ENCODE measurements at regions of chr2 and their contacts with region 1.

Region 1: GRCh38 chr2:45935791-45936622 is 284.5 kb downstream of the PRKCE start:
- DNase-seq: peak; percentile 95 to 98
- ATAC-seq: peak; percentile 75
- H3K4me3 ChIP-seq: no peak overlapping the region
- H3K27ac ChIP-seq: peak overlapping the region; percentile 89 to 90
- H3K4me1 ChIP-seq: peaks cover 44% of the 10 kb centered on the region
- CTCF ChIP-seq: peak; percentile 97
- EP300 ChIP-seq: peak in 1 of 2 experiments; percentile 59; a peak in 1 of 5 replicates
- POLR2A ChIP-seq: no peak
- RAD21 ChIP-seq: peak; percentile 98

Region 2: DNA sequence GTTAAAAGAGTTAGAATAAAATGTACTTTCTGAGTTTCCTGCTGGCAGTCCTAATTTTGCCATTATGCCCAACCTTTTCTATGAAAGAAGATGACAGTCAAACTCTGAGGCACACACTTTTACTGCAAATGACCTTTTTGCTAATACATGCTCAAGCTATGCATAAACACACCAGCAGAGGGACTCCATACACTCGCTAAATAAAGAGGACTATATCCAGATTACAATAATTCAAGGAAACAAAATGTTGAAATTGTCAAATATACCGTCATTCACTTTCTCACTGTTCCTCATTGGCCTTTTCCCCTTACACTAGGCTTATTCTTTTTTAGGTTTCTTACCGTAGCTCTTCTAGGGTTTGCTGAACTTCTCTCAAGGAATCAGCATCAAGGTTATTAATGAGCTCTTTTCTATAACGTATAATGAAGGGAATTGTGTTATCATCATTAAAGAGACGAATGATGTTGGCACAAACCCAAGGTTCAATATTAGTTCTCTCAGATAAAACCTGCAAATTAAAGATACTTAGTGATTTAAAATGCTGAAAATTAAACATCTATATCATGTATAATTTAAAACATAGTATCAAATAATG is 350.6 kb before region 1 on chr2:
- CTCF ChIA-PET with region 1: interaction called, 20 read pairs
- POLR2A ChIA-PET with region 1: no interaction called
- DNase-seq: peak; percentile 43 to 77
- ATAC-seq: peak; percentile 91 to 92
- H3K4me3 ChIP-seq: no peak overlapping the region
- H3K27ac ChIP-seq: no peak overlapping the region
- H3K4me1 ChIP-seq: peaks cover 9% of the 10 kb centered on the region; the same call in 2 of the 3 replicates
- CTCF ChIP-seq: peak; percentile 77
- EP300 ChIP-seq: no peak
- POLR2A ChIP-seq: no peak
- RAD21 ChIP-seq: peak; percentile 64 to 65

Region 3: DNA sequence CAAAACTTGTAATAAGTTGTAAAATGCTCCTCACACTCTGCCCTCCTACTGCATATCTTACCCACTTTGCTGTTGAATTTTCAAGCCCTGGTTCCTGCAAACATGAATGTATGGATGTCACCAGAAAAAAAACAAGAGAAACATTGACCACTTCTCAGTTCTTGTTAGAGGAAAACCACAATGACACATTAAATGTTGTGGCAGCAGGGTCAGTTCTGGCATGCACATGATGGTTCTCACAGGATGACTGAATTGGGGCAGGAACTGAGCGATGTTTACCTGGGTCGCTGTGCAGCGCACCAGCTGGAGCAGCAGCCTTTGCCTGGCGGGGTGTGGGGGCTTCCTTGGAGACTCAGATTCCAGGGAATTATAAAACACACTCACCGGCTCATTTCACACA is 298.6 kb before region 1 on chr2:
- CTCF ChIA-PET with region 1: interaction called, 33 read pairs
- POLR2A ChIA-PET with region 1: no interaction called
- DNase-seq: no peak
- ATAC-seq: no peak
- H3K4me3 ChIP-seq: no peak overlapping the region
- H3K27ac ChIP-seq: no peak overlapping the region
- H3K4me1 ChIP-seq: no peaks in the 10 kb centered on the region
- CTCF ChIP-seq: no peak
- EP300 ChIP-seq: no peak
- POLR2A ChIP-seq: no peak
- RAD21 ChIP-seq: no peak

Region 4: GRCh38 chr2:45643543-45644542 is 292.2 kb before region 1 on chr2:
- CTCF ChIA-PET with region 1: interaction called, 76 read pairs
- POLR2A ChIA-PET with region 1: interaction called, 5 read pairs
- DNase-seq: peak; percentile 61 to 90
- ATAC-seq: peak; percentile 94 to 99
- H3K4me3 ChIP-seq: peak overlapping the region; percentile 63
- H3K27ac ChIP-seq: peak overlapping the region; percentile 89 to 93
- H3K4me1 ChIP-seq: peaks cover 15% of the 10 kb centered on the region
- CTCF ChIP-seq: peak; percentile 99
- EP300 ChIP-seq: no peak
- POLR2A ChIP-seq: no peak
- RAD21 ChIP-seq: peak; percentile 94 to 100

Region 5: GRCh38 chr2:45650851-45651414 is 285.1 kb before region 1 on chr2:
- CTCF ChIA-PET with region 1: interaction called, 76 read pairs
- POLR2A ChIA-PET with region 1: interaction called, 10 read pairs
- DNase-seq: peak; percentile 72 to 97
- ATAC-seq: peak; percentile 84 to 86
- H3K4me3 ChIP-seq: peak overlapping the region; percentile 83
- H3K27ac ChIP-seq: peak overlapping the region; percentile 86 to 90
- H3K4me1 ChIP-seq: peaks cover 23% of the 10 kb centered on the region
- CTCF ChIP-seq: peak; percentile 58
- EP300 ChIP-seq: peak in 1 of 2 experiments; percentile 18; a peak in 1 of 5 replicates
- POLR2A ChIP-seq: peak; percentile 74
- RAD21 ChIP-seq: peak; percentile 20 to 54; a peak in 3 of 5 replicates

Region 6: DNA sequence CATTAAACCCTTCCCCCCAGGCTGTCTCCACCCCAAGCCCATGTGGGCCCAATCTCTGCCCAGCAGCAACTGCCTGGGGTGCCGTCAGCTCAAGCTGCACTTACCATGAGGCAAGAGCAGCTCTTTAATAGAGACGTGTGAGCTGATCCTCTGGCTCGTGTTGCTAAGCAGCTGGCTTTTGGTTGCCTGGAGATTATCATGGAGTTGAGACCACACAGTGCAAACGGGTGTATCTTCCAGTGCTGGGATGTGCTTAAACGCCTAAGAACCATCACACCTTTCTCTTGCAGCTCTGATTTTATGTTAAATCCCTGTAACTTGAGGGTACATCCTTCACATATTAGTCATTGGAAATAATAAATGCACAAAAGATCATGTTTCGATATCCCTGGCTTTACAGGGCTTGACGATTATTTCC is 13.4 kb before region 1 on chr2:
- CTCF ChIA-PET with region 1: interaction called, 11 read pairs
- POLR2A ChIA-PET with region 1: no interaction called
- DNase-seq: no peak
- ATAC-seq: no peak
- H3K4me3 ChIP-seq: no peak overlapping the region
- H3K27ac ChIP-seq: no peak overlapping the region
- H3K4me1 ChIP-seq: no peaks in the 10 kb centered on the region
- CTCF ChIP-seq: no peak
- EP300 ChIP-seq: no peak
- POLR2A ChIP-seq: no peak
- RAD21 ChIP-seq: no peak

Region 7: DNA sequence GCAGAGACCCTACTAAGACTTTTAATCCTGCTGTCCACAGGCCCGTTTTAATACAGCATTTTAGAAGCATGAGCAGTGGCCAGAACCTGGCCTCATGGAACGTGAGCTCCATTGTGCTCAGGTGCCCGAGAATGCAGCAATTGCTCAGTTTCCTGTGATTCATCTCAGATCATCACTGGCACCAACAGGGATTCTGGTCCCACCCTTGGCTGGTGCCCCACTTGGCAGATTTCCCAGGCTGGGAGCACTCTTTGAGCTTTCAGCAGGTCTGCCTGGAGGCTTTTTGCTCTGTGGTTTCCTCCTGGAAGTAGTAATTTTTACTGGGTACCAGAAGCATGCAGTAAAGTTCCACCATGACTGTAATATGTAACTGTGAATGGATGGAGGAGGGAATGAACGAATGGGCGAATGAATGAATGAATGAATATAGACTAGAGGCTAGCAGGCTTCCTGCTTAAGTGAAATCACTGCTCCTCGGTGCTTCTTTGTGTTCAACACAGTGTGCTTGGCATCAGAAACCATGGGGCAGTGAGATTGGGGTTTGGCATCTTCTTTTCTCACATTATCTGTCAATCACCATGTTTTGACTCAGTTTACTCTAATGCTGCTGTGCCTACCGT is 28.3 kb after region 1 on chr2:
- CTCF ChIA-PET with region 1: interaction called, 12 read pairs
- POLR2A ChIA-PET with region 1: interaction called, 4 read pairs
- DNase-seq: peak; percentile 72 to 94
- ATAC-seq: peak; percentile 82 to 87
- H3K4me3 ChIP-seq: no peak overlapping the region
- H3K27ac ChIP-seq: peak overlapping the region; percentile 70 to 81
- H3K4me1 ChIP-seq: peaks cover 62% of the 10 kb centered on the region
- CTCF ChIP-seq: no peak
- EP300 ChIP-seq: peak; percentile 57 to 78; a peak in 2 of 5 replicates
- POLR2A ChIP-seq: no peak
- RAD21 ChIP-seq: peak; percentile 26 to 44; a peak in 2 of 5 replicates